ENCODE measurements at regions of chr13 and their contacts with region 1.

Region 1: GRCh38 chr13:29850224-29850898 is at the start of gene UBL3:
- H3K4me3 Mint-ChIP-seq: peak within 1 kb of the TSS; percentile 92
- H3K27ac Mint-ChIP-seq: peak within 1 kb of the TSS; percentile 99
- H3K4me1 Mint-ChIP-seq: peaks cover 41% of the 10 kb centered on the region
- H3K27me3 Mint-ChIP-seq: no peaks in the 10 kb centered on the region

Region 2: DNA sequence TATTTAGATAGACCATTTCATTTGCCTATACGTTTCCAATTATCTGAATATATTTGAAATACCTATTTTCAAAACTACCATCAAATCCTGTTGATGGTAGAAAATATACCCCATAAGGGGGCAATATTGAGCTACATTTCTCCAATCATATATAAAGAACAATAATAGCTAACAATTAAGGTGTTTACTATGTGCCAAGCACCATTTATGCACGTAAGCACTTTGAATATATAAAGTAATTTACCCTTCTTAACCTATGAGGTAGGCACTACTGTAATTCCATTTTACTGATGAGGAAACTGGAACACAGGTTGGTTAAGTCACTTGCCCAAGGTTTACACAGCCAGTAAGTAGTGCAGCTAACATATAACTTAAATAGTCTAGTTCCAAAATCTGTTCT is 79.1 kb before region 1 on chr13:
- intact Hi-C with region 1: loop called (anchors 5 kb)
- H3K4me3 Mint-ChIP-seq: no peak overlapping the region
- H3K27ac Mint-ChIP-seq: no peak overlapping the region
- H3K4me1 Mint-ChIP-seq: no peaks in the 10 kb centered on the region
- H3K27me3 Mint-ChIP-seq: no peaks in the 10 kb centered on the region

Region 3: DNA sequence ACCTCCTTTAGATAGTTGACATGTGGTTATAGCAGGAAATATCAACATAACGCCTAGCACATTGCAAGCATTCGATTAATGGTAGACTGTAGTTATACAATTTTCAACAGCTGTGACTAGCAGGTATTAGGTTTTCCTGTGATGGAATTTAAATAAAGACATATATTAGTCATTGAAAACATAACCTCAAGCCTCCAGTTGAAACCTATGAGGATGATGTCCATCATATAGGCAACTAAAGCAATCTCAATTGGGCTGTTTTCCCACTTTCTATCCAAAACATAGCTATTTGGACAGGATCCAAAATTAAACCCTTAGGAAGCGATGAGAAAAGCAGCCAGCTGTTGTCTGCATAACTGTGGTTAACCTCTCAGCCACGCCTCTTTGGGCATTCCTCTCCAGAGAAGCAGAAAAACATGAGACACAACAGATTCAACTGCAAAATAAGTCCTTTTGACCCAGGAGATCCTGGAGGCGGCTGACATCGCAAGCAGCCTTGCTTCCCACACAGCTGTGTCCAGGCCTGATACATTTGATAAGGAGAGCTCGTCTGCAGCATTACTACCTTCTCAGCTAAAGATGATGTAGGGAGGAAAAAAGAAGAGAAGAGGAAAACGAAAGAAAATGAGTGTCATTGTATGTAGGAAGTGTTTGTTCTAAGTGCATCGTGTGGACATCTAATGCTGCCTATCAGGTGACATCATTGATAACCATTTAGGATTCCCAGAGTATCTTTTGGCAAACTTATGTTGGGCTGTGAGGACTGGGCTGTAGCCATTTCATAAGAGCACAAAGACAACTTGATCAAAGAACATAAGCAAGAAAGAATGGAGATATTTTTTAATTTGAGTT is 52.0 kb after region 1 on chr13:
- intact Hi-C with region 1: loop called (anchors 10 kb)
- H3K4me3 Mint-ChIP-seq: peak overlapping the region; percentile 62
- H3K27ac Mint-ChIP-seq: peak overlapping the region; percentile 16
- H3K4me1 Mint-ChIP-seq: peaks cover 12% of the 10 kb centered on the region
- H3K27me3 Mint-ChIP-seq: peaks cover 4% of the 10 kb centered on the region

Region 4: DNA sequence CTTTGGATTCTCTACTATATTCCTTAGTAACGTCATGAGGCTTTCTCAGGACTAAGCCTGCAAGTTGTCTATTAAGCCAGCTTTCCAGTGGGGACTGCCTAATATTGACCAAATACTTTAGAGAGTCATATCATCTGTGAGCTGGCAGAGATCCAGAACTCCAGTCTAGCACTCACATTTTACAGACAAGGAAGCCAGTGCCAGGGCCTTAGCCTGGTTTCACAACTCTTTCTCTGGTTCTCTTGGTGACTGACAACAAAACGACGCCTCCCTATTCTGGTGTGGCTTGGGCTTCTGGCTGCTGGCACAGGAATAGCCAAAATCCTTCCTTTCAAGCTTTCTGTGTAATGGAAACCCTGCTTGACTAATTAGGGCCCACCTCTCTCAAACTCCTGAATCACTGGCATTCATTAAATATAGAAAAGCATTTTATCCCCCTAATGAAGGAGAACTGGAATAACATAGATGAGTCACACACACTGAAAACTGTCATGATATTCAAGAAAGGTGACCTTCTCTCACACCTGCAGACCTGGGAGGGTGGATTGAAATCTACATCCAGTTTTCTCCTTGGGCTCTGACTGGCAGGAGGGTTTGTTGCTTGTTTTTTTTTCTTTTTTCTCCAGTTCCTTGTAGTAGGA is 75.2 kb after region 1 on chr13:
- intact Hi-C with region 1: loop called (anchors 5 kb)
- H3K4me3 Mint-ChIP-seq: no peak overlapping the region
- H3K27ac Mint-ChIP-seq: no peak overlapping the region
- H3K4me1 Mint-ChIP-seq: peaks cover 24% of the 10 kb centered on the region
- H3K27me3 Mint-ChIP-seq: peaks cover 3% of the 10 kb centered on the region

Region 5: GRCh38 chr13:30114571-30115256 is 264.4 kb after region 1 on chr13:
- intact Hi-C with region 1: loop called (anchors 1 kb)
- H3K4me3 Mint-ChIP-seq: peak overlapping the region; percentile 63
- H3K27ac Mint-ChIP-seq: peak overlapping the region; percentile 34
- H3K4me1 Mint-ChIP-seq: peaks cover 41% of the 10 kb centered on the region
- H3K27me3 Mint-ChIP-seq: peaks cover 52% of the 10 kb centered on the region